Activated T-helper 1 cell treated with anti-CD3 and anti-CD28 coated beads, Interleukin-12 subunit alpha, Interleukin-12 subunit beta, Interleukin-2, Interleukin-4 antibody, amounts not matched to agents 30 ng/mL and 10 ng/mL and 1 ng/mL, durations not matched to agents 14 hours and 24 hours and 36 hours (primary cell): ENCODE measurements at regions of chr18 and their contacts with region 1.

Region 1: GRCh38 chr18:47893939-47894699 is 36.3 kb downstream of the SMAD2 start:
- DNase-seq: no peak
- H3K4me3 Mint-ChIP-seq: no peak overlapping the region
- H3K27ac Mint-ChIP-seq: peak overlapping the region; percentile 61
- H3K4me1 Mint-ChIP-seq: peaks cover 59% of the 10 kb centered on the region
- H3K27me3 Mint-ChIP-seq: no peaks in the 10 kb centered on the region

Region 2: GRCh38 chr18:47883771-47884413 is 10.2 kb before region 1 on chr18:
- intact Hi-C with region 1: loop called (anchors 1 kb)
- DNase-seq: no peak
- H3K4me3 Mint-ChIP-seq: no peak overlapping the region
- H3K27ac Mint-ChIP-seq: peak overlapping the region; percentile 61
- H3K4me1 Mint-ChIP-seq: peaks cover 42% of the 10 kb centered on the region
- H3K27me3 Mint-ChIP-seq: no peaks in the 10 kb centered on the region